ENCODE measurements at regions of chr9 and their contacts with region 1.

Region 1: GRCh38 chr9:129783516-129784361 is 19.2 kb upstream of the TOR1B start:
- DNase-seq: peak; percentile 46
- ATAC-seq: peak; percentile 90
- H3K4me3 ChIP-seq: no peak overlapping the region
- H3K27ac ChIP-seq: no peak overlapping the region
- H3K4me1 ChIP-seq: no peaks in the 10 kb centered on the region
- H3K27me3 ChIP-seq: peaks cover 3 to 24% of the 10 kb centered on the region in 2 experiments; a peak in 2 of 5 replicates
- CTCF ChIP-seq: peak; percentile 89
- EP300 ChIP-seq: no peak
- POLR2A ChIP-seq: no peak
- RAD21 ChIP-seq: peak; percentile 85

Region 2: GRCh38 chr9:129641746-129642513 is 141.8 kb before region 1 on chr9 and contains the start of gene ASB6:
- CTCF ChIA-PET with region 1: interaction called, 15 read pairs
- POLR2A ChIA-PET with region 1: no interaction called
- in situ Hi-C with region 1: loop called (anchors 10 kb)
- intact Hi-C with region 1: loop called (anchors 5 kb)
- DNase-seq: peak; percentile 92
- ATAC-seq: peak; percentile 95
- H3K4me3 ChIP-seq: peak within 1 kb of the TSS; percentile 92 to 100 (median 98)
- H3K27ac ChIP-seq: peak within 1 kb of the TSS; percentile 51
- H3K4me1 ChIP-seq: peaks cover 30% of the 10 kb centered on the region
- H3K27me3 ChIP-seq: peaks cover 0 to 11% of the 10 kb centered on the region in 2 experiments; a peak in 2 of 5 replicates
- CTCF ChIP-seq: peak; percentile 97
- EP300 ChIP-seq: no peak
- POLR2A ChIP-seq: peak in 1 of 2 experiments; percentile 32; a peak in 1 of 4 replicates
- RAD21 ChIP-seq: peak; percentile 99
- total RNA-seq, gene ASB6: 8.2 and 8.3 TPM in 2 replicates

Region 3: GRCh38 chr9:129726322-129727160 is 57.2 kb before region 1 on chr9:
- CTCF ChIA-PET with region 1: interaction called, 16 read pairs
- POLR2A ChIA-PET with region 1: no interaction called
- in situ Hi-C with region 1: no loop called
- intact Hi-C with region 1: no loop called
- DNase-seq: peak; percentile 30
- ATAC-seq: peak; percentile 86
- H3K4me3 ChIP-seq: no peak overlapping the region
- H3K27ac ChIP-seq: no peak overlapping the region
- H3K4me1 ChIP-seq: no peaks in the 10 kb centered on the region
- H3K27me3 ChIP-seq: peaks cover 3 to 37% of the 10 kb centered on the region in 2 experiments; a peak in 4 of 5 replicates
- CTCF ChIP-seq: peak; percentile 80
- EP300 ChIP-seq: no peak
- POLR2A ChIP-seq: no peak
- RAD21 ChIP-seq: peak; percentile 69

Region 4: GRCh38 chr9:129737479-129738274 is 46.1 kb before region 1 on chr9:
- CTCF ChIA-PET with region 1: interaction called, 56 read pairs
- POLR2A ChIA-PET with region 1: no interaction called
- in situ Hi-C with region 1: loop called (anchors 5 kb)
- intact Hi-C with region 1: loop called (anchors 1 kb)
- DNase-seq: peak; percentile 45
- ATAC-seq: peak; percentile 85
- H3K4me3 ChIP-seq: peak overlapping the region; percentile 39 to 67 (median 65); a peak in 4 of 6 replicates
- H3K27ac ChIP-seq: no peak overlapping the region
- H3K4me1 ChIP-seq: 0 out of 2 replicates have a peak, but pooled peaks cover 5% of the 10 kb centered on the region
- H3K27me3 ChIP-seq: peaks cover 7 to 51% of the 10 kb centered on the region in 2 experiments; a peak in 3 of 5 replicates
- CTCF ChIP-seq: peak; percentile 96
- EP300 ChIP-seq: no peak
- POLR2A ChIP-seq: no peak
- RAD21 ChIP-seq: peak; percentile 92

Measured in HepG2 (cell line).